ENCODE measurements at regions of chr19 and their contacts with region 1.

Region 1: DNA sequence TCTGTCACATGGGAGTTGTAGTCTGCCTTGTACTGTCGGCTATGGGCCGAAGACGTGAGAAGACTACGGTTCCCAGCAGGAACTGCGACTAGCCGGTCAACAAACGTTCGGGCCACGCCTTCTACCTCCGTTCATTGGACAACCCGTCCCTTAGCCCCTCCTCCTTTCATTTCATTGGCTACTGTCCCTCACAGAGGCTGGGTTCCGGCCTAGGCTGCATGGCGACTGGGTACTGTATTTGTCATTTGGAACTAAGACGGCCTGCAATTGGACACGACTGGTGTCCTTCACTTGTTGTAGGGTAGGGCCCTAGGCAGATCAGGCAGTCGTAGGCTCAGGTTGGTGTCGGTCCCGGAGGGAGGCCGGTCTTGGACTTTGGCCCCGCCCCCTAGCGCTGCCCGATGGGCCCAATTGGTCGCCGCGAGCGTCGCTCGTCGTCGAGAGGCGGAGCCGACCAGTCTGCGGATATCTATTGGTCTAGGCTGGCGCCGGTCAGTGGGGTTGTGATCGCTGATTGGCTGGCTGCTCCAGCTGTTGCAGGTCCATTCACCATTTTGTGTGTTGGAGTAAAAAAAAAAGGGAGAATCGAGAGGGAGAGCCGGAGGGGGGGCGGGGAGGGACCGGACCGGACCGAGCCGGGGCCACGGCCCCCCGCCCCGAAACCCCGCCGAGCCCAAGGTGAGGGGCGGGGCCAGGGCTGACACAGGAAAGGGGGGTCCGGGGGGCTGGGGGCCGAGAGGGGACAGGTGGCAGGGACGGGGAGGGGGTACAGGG is at the start of gene CIC:
- DNase-seq: peak; percentile 99
- H3K4me3 Mint-ChIP-seq: no peak within 1 kb of the TSS
- H3K27ac Mint-ChIP-seq: peak within 1 kb of the TSS; percentile 99
- H3K4me1 Mint-ChIP-seq: peaks cover 25% of the 10 kb centered on the region
- H3K27me3 Mint-ChIP-seq: no peaks in the 10 kb centered on the region
- total RNA-seq, gene CIC: 68.3 and 69.3 TPM in 2 replicates

Region 2: GRCh38 chr19:42219812-42220750 is 48.8 kb before region 1 on chr19 and contains the start of gene ZNF526:
- intact Hi-C with region 1: loop called (anchors 2 kb)
- DNase-seq: peak; percentile 98
- H3K4me3 Mint-ChIP-seq: peak within 1 kb of the TSS; percentile 99
- H3K27ac Mint-ChIP-seq: peak within 1 kb of the TSS; percentile 95
- H3K4me1 Mint-ChIP-seq: peaks cover 33% of the 10 kb centered on the region
- H3K27me3 Mint-ChIP-seq: no peaks in the 10 kb centered on the region
- total RNA-seq, gene ZNF526: 17.3 and 18.4 TPM in 2 replicates

Region 3: DNA sequence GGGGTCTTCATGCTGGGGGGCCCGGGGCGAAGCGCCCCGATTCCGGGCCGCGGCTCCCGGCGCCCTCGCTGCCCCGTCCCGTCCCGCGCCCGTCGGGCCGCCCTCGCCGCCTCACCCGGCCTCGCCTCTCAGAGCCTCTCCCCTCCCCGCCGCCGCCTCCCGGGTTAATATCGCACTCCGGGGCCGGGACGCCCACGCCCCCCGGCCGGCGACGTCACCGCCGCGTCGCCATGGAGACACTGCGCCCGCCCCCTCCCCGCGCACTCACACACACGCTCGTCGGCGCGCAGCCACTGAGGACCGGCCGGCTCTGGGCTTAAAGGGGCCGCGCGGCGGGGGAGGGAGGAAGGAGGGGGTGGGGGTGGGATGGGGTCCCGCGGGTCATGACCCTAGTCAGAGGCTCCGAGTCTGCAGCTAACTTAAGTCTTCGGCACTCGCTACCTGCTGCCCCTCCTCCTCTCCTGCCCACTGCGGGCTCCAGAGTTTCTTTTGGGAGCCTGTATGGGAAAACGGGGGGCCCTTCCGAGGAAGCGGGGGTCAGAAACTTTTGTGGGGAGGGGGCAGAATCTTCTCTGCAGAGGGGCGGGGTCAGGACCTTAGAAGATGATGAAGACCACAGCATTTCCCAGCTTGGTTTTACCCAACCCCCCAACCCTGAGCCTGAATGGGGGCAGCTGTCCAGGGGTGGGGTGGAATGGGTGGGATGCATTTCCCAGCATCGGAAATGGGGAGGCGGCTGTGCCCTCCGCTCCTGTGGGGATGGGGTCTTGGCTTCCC is 13.7 kb before region 1 on chr19 and contains the start of gene ERF:
- intact Hi-C with region 1: loop called (anchors 1 kb)
- DNase-seq: peak; percentile 91
- H3K4me3 Mint-ChIP-seq: peak within 1 kb of the TSS; percentile 74
- H3K27ac Mint-ChIP-seq: peak within 1 kb of the TSS; percentile 62
- H3K4me1 Mint-ChIP-seq: peaks cover 18% of the 10 kb centered on the region
- H3K27me3 Mint-ChIP-seq: peaks cover 7% of the 10 kb centered on the region
- total RNA-seq, gene ERF: 58.4 and 59.1 TPM in 2 replicates

Region 4: DNA sequence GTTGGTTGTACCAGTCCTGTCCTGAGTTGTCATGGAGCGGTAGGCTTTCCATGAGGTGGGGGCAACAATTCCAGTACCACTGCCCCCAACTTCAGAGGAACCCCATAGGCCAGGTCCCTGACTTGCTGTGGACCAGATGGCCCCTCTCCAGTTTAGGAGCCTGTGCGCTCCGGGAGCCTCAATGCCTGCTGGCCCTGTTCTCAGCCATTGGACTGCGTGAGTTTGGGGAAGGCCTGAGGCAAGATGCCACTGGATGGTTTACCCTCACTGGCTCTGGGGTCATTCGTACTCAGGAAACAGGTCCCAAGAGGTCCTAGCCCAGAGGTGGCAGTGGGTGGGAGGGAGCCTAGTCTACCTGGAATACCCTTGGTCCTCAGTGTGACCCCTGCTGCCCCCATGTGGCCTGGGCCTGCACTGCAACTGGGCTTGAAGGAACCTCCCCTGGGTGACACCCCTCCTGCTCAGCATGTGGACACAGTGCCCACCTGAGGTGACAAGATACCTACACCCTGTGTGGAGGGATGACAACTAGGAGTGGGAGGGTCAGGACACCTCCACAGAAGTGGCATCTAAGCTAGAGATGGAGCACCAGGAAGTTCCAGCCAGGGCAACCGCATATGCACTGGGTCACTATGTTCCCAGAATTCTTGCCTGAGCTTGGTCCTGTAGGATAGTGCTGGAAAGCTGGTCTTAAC is 27.1 kb after region 1 on chr19:
- intact Hi-C with region 1: no loop called
- DNase-seq: peak; percentile 80
- H3K4me3 Mint-ChIP-seq: no peak overlapping the region
- H3K27ac Mint-ChIP-seq: no peak overlapping the region
- H3K4me1 Mint-ChIP-seq: no peaks in the 10 kb centered on the region
- H3K27me3 Mint-ChIP-seq: no peaks in the 10 kb centered on the region